MCF 10A (cell line): ENCODE measurements at regions of chr4 and their contacts with region 1.

Region 1: GRCh38 chr4:86934771-86935565 is at the start of gene AFF1:
- DNase-seq: peak; percentile 88
- H3K4me3 Mint-ChIP-seq: peak within 1 kb of the TSS; percentile 85
- H3K27ac Mint-ChIP-seq: peak within 1 kb of the TSS; percentile 91
- H3K4me1 Mint-ChIP-seq: peaks cover 35% of the 10 kb centered on the region
- H3K27me3 Mint-ChIP-seq: no peaks in the 10 kb centered on the region
- CTCF ChIP-seq: peak; percentile 23
- total RNA-seq, gene AFF1: 56.2 and 61.9 TPM in 2 replicates

Region 2: GRCh38 chr4:86848732-86849619 is 86.0 kb before region 1 on chr4 and contains the start of gene SLC10A6:
- CTCF ChIA-PET with region 1: no interaction called
- POLR2A ChIA-PET with region 1: no interaction called
- intact Hi-C with region 1: no loop called
- DNase-seq: peak; percentile 13
- H3K4me3 Mint-ChIP-seq: peak within 1 kb of the TSS; percentile 38
- H3K27ac Mint-ChIP-seq: peak within 1 kb of the TSS; percentile 75
- H3K4me1 Mint-ChIP-seq: peaks cover 28% of the 10 kb centered on the region
- H3K27me3 Mint-ChIP-seq: no peaks in the 10 kb centered on the region
- CTCF ChIP-seq: no peak
- total RNA-seq, gene SLC10A6: not detected in 2 replicates

Region 3: DNA sequence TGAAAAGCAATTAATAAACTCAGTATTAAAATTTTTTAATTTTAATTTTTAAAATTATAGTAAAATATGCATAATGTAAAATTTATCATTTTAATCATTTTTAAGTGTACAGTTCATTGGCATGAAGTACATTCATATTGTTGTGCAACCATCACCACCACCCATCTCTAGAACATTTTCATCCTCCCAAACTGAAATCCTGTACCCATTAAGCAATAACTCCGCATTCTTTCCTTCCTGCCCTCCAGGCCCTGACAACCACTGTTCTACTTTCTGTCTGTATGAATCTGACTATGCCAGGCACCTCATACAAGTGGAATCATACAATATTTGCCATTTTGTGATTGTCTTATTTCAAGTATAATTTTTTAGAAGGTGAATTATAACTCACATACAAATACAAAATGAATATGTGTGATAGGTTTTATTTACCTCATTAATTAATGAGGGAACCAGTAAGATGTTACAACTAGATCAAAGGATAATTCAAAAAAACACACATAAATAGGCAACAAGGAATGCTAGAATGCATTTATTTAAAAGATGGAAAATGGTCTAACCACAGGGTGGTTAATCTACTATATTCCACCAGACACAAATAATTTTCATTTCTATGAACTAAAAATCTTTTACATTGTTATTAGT is 13.2 kb before region 1 on chr4:
- CTCF ChIA-PET with region 1: interaction called, 61 read pairs
- POLR2A ChIA-PET with region 1: interaction called, 146 read pairs
- intact Hi-C with region 1: loop called (anchors 1 kb)
- DNase-seq: peak; percentile 89
- H3K4me3 Mint-ChIP-seq: peak overlapping the region; percentile 48
- H3K27ac Mint-ChIP-seq: peak overlapping the region; percentile 84
- H3K4me1 Mint-ChIP-seq: peaks cover 52% of the 10 kb centered on the region
- H3K27me3 Mint-ChIP-seq: no peaks in the 10 kb centered on the region
- CTCF ChIP-seq: no peak

Region 4: DNA sequence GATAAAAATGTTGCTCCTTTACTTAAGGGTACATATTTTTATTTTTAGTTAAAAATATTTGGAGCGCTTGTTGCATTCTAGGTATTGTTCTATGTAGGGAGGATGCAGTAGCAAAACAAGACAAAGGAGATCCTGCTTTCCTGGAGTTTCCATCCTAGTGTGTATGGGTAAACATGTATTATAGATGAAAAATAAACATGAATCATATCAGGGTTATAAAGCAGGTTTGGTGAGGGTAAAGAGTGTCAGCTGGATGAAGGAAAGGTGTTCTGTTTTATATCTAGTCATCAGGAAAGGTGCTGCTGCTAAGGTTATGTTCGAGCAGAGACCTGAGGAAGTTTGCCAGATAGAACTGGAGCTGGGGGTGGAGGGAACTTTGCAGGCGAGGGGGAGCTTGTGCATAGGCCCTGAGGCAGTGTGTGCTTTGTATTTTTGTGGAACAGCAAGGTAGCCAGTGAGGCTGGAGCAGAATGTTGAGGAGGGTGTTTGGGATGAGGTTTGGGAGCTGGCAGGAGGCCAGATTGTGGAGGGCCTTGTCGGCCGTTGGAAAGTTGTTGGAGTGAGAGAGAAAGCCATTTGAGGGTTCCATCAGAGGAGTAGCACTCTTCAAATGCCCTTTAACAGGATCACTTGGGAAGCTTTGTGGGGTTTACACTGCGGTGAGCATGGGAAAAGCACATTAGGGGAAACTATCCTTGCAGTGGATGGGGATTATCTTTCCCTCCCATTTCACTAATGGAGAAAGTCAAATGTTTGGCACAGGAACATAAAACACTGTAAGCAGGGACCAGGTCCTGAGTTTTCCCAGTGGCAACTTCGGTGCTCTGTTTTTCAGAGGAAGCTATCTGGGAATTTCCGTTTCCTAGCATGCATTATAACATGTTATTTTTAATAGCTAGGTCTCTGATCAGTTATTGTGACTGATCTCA is 35.7 kb after region 1 on chr4:
- CTCF ChIA-PET with region 1: interaction called, 6 read pairs
- POLR2A ChIA-PET with region 1: interaction called, 15 read pairs
- intact Hi-C with region 1: no loop called
- DNase-seq: no peak
- H3K4me3 Mint-ChIP-seq: no peak overlapping the region
- H3K27ac Mint-ChIP-seq: no peak overlapping the region
- H3K4me1 Mint-ChIP-seq: peaks cover 48% of the 10 kb centered on the region
- H3K27me3 Mint-ChIP-seq: no peaks in the 10 kb centered on the region
- CTCF ChIP-seq: no peak

Region 5: GRCh38 chr4:87014284-87014782 is 79.4 kb after region 1 on chr4:
- CTCF ChIA-PET with region 1: interaction called, 10 read pairs
- POLR2A ChIA-PET with region 1: interaction called, 256 read pairs
- intact Hi-C with region 1: no loop called
- DNase-seq: no peak
- H3K4me3 Mint-ChIP-seq: peak overlapping the region; percentile 25
- H3K27ac Mint-ChIP-seq: peak overlapping the region; percentile 82
- H3K4me1 Mint-ChIP-seq: peaks cover 44% of the 10 kb centered on the region
- H3K27me3 Mint-ChIP-seq: no peaks in the 10 kb centered on the region
- CTCF ChIP-seq: no peak

Region 6: DNA sequence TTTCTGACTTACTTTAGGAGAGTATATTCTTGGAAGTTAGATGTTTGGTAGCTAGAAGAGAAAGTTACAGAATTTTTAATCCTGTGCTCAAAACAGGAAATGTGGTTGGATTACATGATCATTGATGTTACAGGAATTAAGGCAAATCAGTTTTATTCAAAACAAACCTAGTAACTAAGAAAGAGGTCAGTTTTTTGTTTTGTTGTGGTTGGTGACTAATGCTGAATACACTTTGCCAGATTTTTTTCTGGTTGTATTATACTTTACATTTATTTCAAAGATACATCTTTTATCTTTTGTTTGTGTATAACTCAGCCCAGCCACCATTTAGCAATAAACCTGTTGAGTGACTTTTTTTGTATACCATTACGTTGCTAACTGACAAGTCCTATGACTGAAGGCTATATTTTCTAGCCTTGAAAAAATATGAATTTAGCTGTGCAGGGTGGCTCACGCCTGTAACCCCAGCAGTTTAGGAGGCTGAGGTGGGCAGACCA is 168.8 kb after region 1 on chr4:
- CTCF ChIA-PET with region 1: no interaction called
- POLR2A ChIA-PET with region 1: interaction called, 10 read pairs
- intact Hi-C with region 1: no loop called
- DNase-seq: peak; percentile 64
- H3K4me3 Mint-ChIP-seq: no peak overlapping the region
- H3K27ac Mint-ChIP-seq: peak overlapping the region; percentile 82
- H3K4me1 Mint-ChIP-seq: peaks cover 33% of the 10 kb centered on the region
- H3K27me3 Mint-ChIP-seq: no peaks in the 10 kb centered on the region
- CTCF ChIP-seq: no peak

Region 7: DNA sequence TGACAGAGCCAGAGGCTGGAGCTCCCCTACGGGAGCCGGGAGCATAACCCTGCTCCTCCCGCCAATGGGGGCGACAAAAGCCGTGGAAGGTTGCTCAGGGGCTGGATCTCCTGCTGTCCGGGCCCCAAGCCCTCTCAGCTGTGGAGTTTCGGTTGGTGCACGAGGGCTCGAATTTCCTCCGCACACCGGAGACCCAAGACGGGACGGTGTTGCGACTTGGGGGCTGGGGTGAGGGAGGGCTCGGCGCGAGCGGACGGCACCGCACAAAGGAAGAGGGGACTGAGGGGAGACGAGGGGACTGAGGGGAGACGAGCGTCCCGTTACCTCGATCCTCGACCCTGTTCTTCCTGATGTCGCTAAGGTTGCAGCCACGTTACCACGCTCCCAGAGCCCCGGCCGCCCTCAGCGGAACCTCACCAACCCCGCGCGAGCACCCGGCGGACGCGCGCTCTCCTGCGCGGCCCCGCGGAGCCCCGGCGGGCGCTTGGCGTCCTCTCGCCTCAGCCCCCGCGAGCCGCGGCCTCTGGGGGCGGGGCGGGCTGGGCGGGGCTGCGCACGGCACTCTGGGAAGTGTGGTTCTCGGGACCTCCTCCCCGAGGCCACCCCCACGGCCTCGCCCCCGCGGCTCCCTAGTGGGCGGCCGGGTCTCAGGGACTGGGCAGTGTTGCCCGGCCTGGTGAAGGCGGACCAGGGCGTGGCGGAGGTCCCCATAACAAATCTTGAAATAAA is 285.3 kb after region 1 on chr4 and contains the start of gene KLHL8:
- CTCF ChIA-PET with region 1: no interaction called
- POLR2A ChIA-PET with region 1: interaction called, 16 read pairs
- intact Hi-C with region 1: no loop called
- DNase-seq: peak; percentile 91
- H3K4me3 Mint-ChIP-seq: peak within 1 kb of the TSS; percentile 91
- H3K27ac Mint-ChIP-seq: peak within 1 kb of the TSS; percentile 81
- H3K4me1 Mint-ChIP-seq: peaks cover 5% of the 10 kb centered on the region
- H3K27me3 Mint-ChIP-seq: no peaks in the 10 kb centered on the region
- CTCF ChIP-seq: peak; percentile 0
- total RNA-seq, gene KLHL8: 12.9 and 14.9 TPM in 2 replicates

Region 8: GRCh38 chr4:88442703-88443191 is 1507.8 kb after region 1 on chr4:
- CTCF ChIA-PET with region 1: no interaction called
- POLR2A ChIA-PET with region 1: no interaction called
- intact Hi-C with region 1: no loop called
- DNase-seq: peak; percentile 12
- H3K4me3 Mint-ChIP-seq: no peak overlapping the region
- H3K27ac Mint-ChIP-seq: no peak overlapping the region
- H3K4me1 Mint-ChIP-seq: peaks cover 6% of the 10 kb centered on the region
- H3K27me3 Mint-ChIP-seq: no peaks in the 10 kb centered on the region
- CTCF ChIP-seq: no peak